Esophagus muscularis mucosa (tissue), 4 donors: ENCODE measurements at regions of chr2 and their contacts with region 1.

Region 1: DNA sequence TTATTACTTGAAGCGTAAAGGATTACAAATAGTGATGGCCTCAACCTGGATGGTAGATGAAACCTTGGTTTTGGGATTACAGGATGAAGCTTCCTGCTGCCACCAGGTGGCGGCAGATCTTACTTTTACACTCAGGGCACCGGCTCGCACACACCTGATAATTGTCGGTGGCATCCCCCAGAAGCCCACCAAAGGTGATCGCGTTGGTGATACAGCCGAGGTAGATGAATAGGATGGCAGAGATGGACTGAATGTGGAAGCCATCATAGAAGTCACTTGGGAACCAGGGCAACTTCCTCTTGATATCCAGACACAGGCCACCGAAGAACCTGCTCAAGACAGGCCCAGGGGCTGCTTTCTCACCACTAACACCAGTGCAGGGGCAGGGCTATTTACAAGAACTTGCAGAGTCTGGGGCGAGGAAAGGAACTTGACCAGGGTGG is 51.8 kb downstream of the MTHFD2 start:
- DNase-seq: no peak
- H3K4me3 ChIP-seq: no peak overlapping the region
- H3K27ac ChIP-seq: no peak overlapping the region
- H3K4me1 ChIP-seq: no peaks in the 10 kb centered on the region
- H3K27me3 ChIP-seq: no peaks in the 10 kb centered on the region
- CTCF ChIP-seq: peak; percentile 69 to 76 (median 70)
- EP300 ChIP-seq: no peak
- POLR2A ChIP-seq: no peak

Region 2: DNA sequence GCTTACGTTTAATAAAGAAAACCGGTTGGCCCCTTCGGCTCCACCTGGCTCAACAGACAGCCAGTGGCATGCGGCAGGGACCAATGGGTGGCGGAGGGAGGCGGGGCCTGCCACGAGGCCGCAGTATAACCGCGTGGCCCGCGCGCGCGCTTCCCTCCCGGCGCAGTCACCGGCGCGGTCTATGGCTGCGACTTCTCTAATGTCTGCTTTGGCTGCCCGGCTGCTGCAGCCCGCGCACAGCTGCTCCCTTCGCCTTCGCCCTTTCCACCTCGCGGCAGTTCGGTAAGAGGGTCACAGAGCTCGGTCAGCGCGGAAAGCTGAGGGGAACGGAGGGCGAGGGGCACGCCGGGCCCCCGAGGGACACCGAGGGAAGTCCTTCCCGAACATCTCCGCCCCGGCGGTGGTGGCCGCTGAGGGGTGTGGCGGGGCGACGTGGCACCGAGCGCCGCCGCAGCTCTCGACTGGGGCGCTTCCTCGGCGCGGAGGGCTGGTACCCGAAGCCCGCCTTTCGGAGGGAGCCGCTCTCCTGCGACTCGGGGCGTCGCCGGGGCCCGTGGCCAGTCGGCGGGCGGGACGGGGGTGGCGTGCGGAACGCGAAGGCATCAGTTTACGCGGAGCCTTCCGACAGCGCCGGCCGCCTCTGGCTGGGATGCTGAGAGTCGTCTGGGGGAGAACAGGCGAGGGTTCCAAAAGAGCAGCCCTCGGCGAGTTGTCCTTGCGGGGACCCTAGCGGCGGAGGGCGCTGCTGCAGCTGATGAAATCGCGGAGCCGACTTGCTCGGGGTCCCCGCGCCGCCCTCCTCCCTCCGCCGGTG is 51.5 kb before region 1 on chr2 and contains the start of gene MTHFD2:
- intact Hi-C with region 1: no loop called
- DNase-seq: peak; percentile 96
- H3K4me3 ChIP-seq: peak within 1 kb of the TSS; percentile 68 to 88 (median 72)
- H3K27ac ChIP-seq: peak within 1 kb of the TSS; percentile 86 to 98 (median 89)
- H3K4me1 ChIP-seq: peaks cover 7 to 34% (median 33%) of the 10 kb centered on the region in 4 donors
- H3K27me3 ChIP-seq: no peaks in the 10 kb centered on the region
- CTCF ChIP-seq: peak; percentile 61 to 83 (median 65)
- EP300 ChIP-seq: no peak
- POLR2A ChIP-seq: peak; percentile 50
- total RNA-seq, gene MTHFD2: 22.0 to 80.8 (median 43.5) TPM

Region 3: DNA sequence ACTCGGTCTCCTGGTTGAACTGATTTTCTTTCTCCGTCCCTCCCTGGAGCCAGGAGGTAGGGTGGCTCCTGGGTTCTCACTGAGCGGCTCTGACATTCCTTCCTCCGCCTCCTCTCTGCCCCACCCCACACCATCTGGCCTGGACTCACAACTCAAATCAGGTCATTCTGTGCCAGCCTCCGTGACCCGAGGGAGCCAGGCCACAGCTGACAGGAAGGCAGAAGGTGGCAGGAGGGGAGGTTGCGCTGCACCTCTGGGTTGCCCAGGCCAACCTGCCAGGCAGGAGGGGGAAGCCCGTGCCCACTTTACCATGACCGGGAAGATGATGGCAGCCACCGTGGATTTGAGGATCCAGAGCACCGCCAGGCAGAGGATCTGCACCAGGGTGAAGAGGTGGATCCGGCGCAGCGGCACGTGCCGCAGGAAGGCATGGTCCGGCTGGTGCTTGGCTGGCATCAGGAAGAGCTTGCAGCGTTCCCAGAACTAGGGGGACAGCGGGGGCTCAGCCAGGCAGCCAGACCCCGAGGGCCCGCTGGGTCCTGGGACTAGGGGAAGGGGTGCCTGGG is 23.5 kb before region 1 on chr2:
- intact Hi-C with region 1: no loop called
- DNase-seq: no peak
- H3K4me3 ChIP-seq: no peak overlapping the region
- H3K27ac ChIP-seq: no peak overlapping the region
- H3K4me1 ChIP-seq: peaks cover 11 to 13% (median 12%) of the 10 kb centered on the region in 4 donors
- H3K27me3 ChIP-seq: no peaks in the 10 kb centered on the region
- CTCF ChIP-seq: no peak
- EP300 ChIP-seq: no peak
- POLR2A ChIP-seq: no peak

Region 4: DNA sequence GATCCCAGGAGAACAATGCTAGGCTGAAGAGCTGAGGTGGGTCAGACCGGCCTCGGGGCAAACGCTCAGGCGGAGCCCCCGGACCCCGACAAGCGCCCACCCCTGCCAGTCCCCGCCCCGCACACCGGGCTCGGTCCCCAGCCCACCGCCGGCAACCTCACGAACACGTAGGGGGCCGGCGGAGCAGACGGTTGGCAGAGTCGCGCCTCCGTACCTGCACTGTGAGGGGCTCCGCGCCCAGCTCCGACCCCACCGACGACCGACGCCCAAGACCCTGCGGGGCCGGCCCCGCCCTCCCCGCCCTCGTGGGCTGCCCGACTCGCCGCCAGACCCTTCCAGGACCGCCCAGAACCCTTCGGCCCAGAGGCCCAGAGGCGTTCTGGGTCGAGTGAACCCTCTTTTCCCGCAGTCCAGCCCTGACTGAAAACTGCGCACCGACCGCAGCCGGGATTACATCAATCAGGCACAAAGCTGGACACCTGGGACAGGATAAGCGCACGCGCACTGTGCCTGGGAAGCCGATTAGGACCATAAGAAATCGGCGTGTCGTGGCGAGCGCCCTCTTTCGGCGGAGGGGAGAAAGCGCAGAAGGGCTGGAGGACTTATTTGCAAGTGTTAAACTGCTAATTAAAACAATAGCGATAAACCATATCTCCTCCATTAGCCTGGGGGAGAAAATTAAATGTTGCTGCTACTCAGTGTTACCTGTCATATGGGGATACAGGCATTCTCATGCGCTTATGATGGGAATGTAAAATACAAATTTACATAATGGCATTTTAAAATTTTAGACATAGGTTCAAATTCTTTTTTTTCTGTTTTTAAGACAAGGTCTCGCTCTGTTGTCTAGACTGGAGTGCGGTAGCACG is 141.6 kb after region 1 on chr2:
- intact Hi-C with region 1: loop called (anchors 10 kb)
- DNase-seq: peak; percentile 97
- H3K4me3 ChIP-seq: peak overlapping the region; percentile 70 to 94 (median 84)
- H3K27ac ChIP-seq: peak overlapping the region; percentile 88 to 93 (median 91)
- H3K4me1 ChIP-seq: peaks cover 40 to 49% (median 47%) of the 10 kb centered on the region in 4 donors
- H3K27me3 ChIP-seq: no peaks in the 10 kb centered on the region
- CTCF ChIP-seq: peak; percentile 98
- EP300 ChIP-seq: no peak
- POLR2A ChIP-seq: peak; percentile 47

Region 5: DNA sequence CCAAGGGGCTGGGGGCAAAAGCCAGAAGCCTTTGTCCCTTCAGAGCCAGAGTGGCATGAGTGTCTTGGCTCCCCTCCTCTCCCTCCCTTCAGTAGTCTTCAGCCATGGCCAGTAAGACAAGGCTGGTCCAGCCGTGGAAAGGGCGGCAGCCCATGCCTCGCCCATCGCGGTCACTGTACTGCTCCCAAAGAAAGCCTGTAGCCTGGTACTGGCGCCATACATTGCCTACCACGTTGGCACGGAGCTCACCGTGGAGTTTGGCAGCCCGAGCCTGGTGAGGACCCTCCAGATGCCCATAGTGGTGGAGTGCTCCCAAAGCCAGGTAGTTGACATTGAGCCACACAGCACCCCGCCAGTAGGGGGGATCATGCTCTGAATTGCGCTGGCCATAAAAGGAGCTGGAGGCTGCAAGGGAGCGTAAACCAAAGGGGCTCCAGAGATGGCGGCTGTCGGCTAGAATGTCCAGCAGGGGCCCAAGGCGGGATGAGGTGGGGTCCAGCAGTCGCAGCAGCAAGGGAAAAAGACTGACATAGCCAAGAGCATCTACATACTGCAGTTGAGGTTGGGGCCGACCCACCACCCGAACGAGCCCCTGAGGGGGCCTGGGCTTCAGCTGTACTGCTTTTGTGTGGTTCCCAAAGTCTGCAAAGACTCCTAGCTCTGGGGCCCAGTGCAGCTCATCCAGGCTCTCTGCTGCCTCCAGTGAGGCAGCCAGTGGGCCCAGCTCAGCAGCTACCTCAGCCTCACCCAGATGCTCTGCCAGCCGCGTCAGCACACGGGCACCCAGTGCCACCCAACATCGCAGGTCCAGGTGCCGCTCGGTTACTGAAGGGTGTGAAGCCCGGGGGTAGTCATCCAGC is 211.2 kb after region 1 on chr2:
- intact Hi-C with region 1: no loop called
- DNase-seq: no peak
- H3K4me3 ChIP-seq: no peak overlapping the region
- H3K27ac ChIP-seq: no peak overlapping the region
- H3K4me1 ChIP-seq: peaks cover 32 to 53% (median 49%) of the 10 kb centered on the region in 4 donors
- H3K27me3 ChIP-seq: no peaks in the 10 kb centered on the region
- CTCF ChIP-seq: no peak
- EP300 ChIP-seq: no peak
- POLR2A ChIP-seq: no peak